Gastrocnemius medialis (tissue), 4 donors: ENCODE measurements at regions of chrX and their contacts with region 1.

Region 1: DNA sequence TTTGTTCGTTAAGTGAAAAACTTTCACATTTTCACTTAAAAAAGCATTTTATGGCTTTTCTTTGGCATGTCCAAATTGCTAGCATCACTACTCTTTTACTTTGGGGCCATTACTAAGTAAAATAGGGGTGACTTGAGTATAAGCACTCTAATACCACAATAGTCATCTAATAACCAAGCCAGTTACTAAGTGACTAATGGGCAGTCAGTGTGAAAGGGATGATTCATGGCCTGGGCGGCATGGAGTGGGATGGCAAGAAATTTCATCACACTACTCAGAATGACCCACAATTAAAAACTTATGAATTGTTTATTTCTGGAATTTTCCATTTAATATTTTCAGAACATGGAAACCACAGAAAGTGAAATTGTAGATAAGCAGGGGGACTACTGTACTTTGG is 60.9 kb downstream of the BMP15 start:
- DNase-seq: no peak
- ATAC-seq: no peak
- H3K4me3 ChIP-seq: no peak overlapping the region
- H3K27ac ChIP-seq: no peak overlapping the region
- H3K4me1 ChIP-seq: no peaks in the 10 kb centered on the region
- H3K27me3 ChIP-seq: no peaks in the 10 kb centered on the region
- CTCF ChIP-seq: no peak
- POLR2A ChIP-seq: no peak

Region 2: GRCh38 chrX:50799531-50799961 is 171.8 kb before region 1 on chrX:
- in situ Hi-C with region 1: no loop called
- intact Hi-C with region 1: no loop called
- DNase-seq: no peak
- ATAC-seq: no peak
- H3K4me3 ChIP-seq: no peak overlapping the region
- H3K27ac ChIP-seq: no peak overlapping the region
- H3K4me1 ChIP-seq: no peaks in the 10 kb centered on the region
- H3K27me3 ChIP-seq: peaks cover 0 to 2% (median 0%) of the 10 kb centered on the region in 3 donors
- CTCF ChIP-seq: no peak
- POLR2A ChIP-seq: no peak

Region 3: DNA sequence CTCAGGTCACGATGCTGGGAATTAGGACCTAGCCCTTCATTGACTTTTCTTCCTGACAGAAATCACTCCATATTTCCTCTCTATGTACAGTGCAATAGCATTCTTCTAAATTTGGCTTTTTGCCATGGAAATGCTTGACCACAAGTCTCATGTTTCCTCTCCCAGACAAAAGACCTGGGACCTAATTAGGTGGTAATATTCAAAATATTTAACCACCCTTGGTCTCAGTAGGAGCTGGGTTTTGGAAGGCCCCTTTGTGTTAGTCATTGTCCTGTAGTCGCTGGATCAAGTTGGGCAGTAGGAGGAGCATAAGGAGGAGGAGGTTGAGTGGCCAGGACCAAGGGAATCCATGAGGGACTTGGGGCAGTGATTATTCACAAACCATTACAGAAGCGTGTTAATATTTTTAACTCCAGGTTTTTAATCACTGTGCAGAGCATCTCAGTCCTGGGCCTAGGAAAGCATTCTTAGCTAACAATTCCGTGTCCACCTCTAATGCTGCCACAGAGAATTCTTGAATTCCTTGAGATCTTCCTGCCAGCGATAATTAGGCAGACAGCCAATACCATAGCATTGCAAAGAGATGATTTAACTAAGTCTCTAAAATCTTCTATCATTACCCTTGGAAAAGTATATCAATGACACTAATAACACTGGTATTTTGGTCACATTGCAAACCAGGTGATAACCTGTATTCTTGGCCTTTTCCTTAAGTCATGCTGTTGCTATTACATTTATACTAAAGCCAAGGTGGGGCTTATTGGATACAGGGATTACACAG is 132.4 kb before region 1 on chrX:
- in situ Hi-C with region 1: no loop called
- intact Hi-C with region 1: no loop called
- DNase-seq: no peak
- ATAC-seq: no peak
- H3K4me3 ChIP-seq: no peak overlapping the region
- H3K27ac ChIP-seq: no peak overlapping the region
- H3K4me1 ChIP-seq: no peaks in the 10 kb centered on the region
- H3K27me3 ChIP-seq: no peaks in the 10 kb centered on the region
- CTCF ChIP-seq: no peak
- POLR2A ChIP-seq: no peak

Region 4: GRCh38 chrX:51053741-51054140 is 82.3 kb after region 1 on chrX:
- in situ Hi-C with region 1: loop called in 1 of 4 experiments (anchors 25 kb)
- intact Hi-C with region 1: no loop called
- DNase-seq: no peak
- ATAC-seq: no peak
- H3K4me3 ChIP-seq: no peak overlapping the region
- H3K27ac ChIP-seq: no peak overlapping the region
- H3K4me1 ChIP-seq: no peaks in the 10 kb centered on the region
- H3K27me3 ChIP-seq: no peaks in the 10 kb centered on the region
- CTCF ChIP-seq: no peak
- POLR2A ChIP-seq: no peak